Naive thymus-derived CD4-positive, alpha-beta T cell (primary cell): ENCODE measurements at regions of chr2 and their contacts with region 1.

Region 1: GRCh38 chr2:157055660-157056199 is 201.8 kb upstream of the GALNT5 start:
- DNase-seq: no peak
- ATAC-seq: no peak
- H3K4me3 ChIP-seq: no peak overlapping the region
- H3K4me3 Mint-ChIP-seq: no peak overlapping the region
- H3K27ac ChIP-seq: no peak overlapping the region
- H3K27ac Mint-ChIP-seq: no peak overlapping the region
- H3K4me1 ChIP-seq: no peaks in the 10 kb centered on the region
- H3K4me1 Mint-ChIP-seq: peaks cover 0 to 2% (median 0%) of the 10 kb centered on the region in 7 donors
- H3K27me3 ChIP-seq: no peaks in the 10 kb centered on the region
- H3K27me3 Mint-ChIP-seq: peaks cover 0 to 6% (median 0%) of the 10 kb centered on the region in 5 donors

Region 2: GRCh38 chr2:155377266-155377680 is 1678.5 kb before region 1 on chr2:
- CTCF ChIA-PET with region 1: no interaction called
- POLR2A ChIA-PET with region 1: no interaction called
- intact Hi-C with region 1: loop called in 1 of 2 experiments (anchors 5 kb)
- DNase-seq: no peak
- ATAC-seq: no peak
- H3K4me3 ChIP-seq: no peak overlapping the region
- H3K4me3 Mint-ChIP-seq: no peak overlapping the region
- H3K27ac ChIP-seq: no peak overlapping the region
- H3K27ac Mint-ChIP-seq: no peak overlapping the region
- H3K4me1 ChIP-seq: no peaks in the 10 kb centered on the region
- H3K4me1 Mint-ChIP-seq: peaks cover 0 to 4% (median 0%) of the 10 kb centered on the region in 7 donors
- H3K27me3 ChIP-seq: peaks cover 0 to 3% of the 10 kb centered on the region in 2 donors
- H3K27me3 Mint-ChIP-seq: peaks cover 0 to 8% (median 6%) of the 10 kb centered on the region in 5 donors